ENCODE measurements at regions of chr7 and their contacts with region 1.

Region 1: DNA sequence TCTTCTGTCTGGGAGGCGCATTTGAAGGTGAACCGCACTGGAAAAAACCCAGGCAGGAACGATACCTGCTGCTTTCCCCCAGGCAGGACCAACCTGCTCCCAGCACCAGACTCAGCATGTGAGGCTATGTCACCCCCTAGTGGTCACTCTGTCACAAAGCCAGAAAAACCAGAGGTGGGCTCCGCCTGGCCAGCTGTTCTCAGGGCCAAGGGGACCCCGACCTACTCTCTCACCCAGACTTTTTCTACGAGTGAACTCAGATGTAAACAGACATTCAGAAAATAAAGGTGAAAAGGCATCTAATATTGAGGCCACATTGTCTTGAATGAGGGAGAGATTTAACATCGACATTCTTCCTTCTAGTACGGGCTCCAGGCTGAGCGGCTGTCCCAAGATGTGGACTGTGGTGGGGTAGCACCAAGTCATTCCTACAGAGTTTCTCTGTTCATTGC is 117.3 kb downstream of the PRKAG2 start:
- DNase-seq: peak in 7 of 10 donors; percentile 48 to 92 (median 57)

Region 2: DNA sequence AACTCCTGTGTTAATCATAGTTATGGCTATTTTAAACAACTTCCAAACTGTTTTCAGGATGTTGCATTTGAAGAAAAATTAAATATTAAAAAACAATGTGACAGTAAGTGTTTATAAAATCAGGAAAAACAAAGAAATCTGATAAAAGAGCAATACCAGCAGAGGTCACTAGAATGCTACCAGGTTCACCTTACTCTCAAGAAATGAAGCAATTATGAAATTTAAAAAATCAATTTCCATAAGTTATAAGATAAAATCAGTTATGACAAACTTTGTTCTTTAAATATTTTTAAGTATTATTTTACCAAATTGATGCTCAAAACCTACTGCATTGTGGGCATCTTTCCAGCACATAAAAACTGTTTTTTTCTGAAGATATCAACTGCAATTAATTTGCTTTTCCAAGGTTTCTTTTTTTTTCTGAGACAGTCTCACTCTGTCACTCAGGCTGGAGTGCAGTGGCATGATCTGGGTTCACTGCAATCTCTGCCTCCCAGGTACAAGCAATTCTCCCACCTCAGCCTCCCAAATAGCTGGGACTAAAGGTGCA is 189.2 kb before region 1 on chr7:
- intact Hi-C with region 1: loop called (anchors 5 kb)
- DNase-seq: no peak